ENCODE measurements at regions of chr1 and their contacts with region 1.

Region 1: GRCh38 chr1:197180252-197180878 is 33.9 kb upstream of the ASPM start:
- DNase-seq: no peak
- H3K4me3 Mint-ChIP-seq: no peak overlapping the region
- H3K27ac Mint-ChIP-seq: no peak overlapping the region
- H3K4me1 Mint-ChIP-seq: no peaks in the 10 kb centered on the region
- H3K27me3 Mint-ChIP-seq: no peaks in the 10 kb centered on the region

Region 2: GRCh38 chr1:197116156-197116555 is 64.2 kb before region 1 on chr1:
- CTCF ChIA-PET with region 1: no interaction called
- DNase-seq: no peak
- H3K4me3 Mint-ChIP-seq: no peak overlapping the region
- H3K27ac Mint-ChIP-seq: no peak overlapping the region
- H3K4me1 Mint-ChIP-seq: peaks cover under 1% of the 10 kb centered on the region
- H3K27me3 Mint-ChIP-seq: no peaks in the 10 kb centered on the region

Region 3: GRCh38 chr1:197224160-197224559 is 43.8 kb after region 1 on chr1:
- CTCF ChIA-PET with region 1: no interaction called
- DNase-seq: no peak
- H3K4me3 Mint-ChIP-seq: no peak overlapping the region
- H3K27ac Mint-ChIP-seq: no peak overlapping the region
- H3K4me1 Mint-ChIP-seq: peaks cover 4% of the 10 kb centered on the region
- H3K27me3 Mint-ChIP-seq: no peaks in the 10 kb centered on the region

Region 4: GRCh38 chr1:197327776-197328364 is 147.5 kb after region 1 on chr1:
- CTCF ChIA-PET with region 1: interaction called, 10 read pairs
- DNase-seq: no peak
- H3K4me3 Mint-ChIP-seq: no peak overlapping the region
- H3K27ac Mint-ChIP-seq: no peak overlapping the region
- H3K4me1 Mint-ChIP-seq: no peaks in the 10 kb centered on the region
- H3K27me3 Mint-ChIP-seq: peaks cover 7% of the 10 kb centered on the region

Measured in activated naive CD4-positive, alpha-beta T cell treated with anti-CD3 and anti-CD28 coated beads, Interleukin-2, amount 10 ng/mL, durations not matched to agents 7 days and 5 days (primary cell).